ENCODE measurements at regions of chr12 and their contacts with region 1.

Region 1: DNA sequence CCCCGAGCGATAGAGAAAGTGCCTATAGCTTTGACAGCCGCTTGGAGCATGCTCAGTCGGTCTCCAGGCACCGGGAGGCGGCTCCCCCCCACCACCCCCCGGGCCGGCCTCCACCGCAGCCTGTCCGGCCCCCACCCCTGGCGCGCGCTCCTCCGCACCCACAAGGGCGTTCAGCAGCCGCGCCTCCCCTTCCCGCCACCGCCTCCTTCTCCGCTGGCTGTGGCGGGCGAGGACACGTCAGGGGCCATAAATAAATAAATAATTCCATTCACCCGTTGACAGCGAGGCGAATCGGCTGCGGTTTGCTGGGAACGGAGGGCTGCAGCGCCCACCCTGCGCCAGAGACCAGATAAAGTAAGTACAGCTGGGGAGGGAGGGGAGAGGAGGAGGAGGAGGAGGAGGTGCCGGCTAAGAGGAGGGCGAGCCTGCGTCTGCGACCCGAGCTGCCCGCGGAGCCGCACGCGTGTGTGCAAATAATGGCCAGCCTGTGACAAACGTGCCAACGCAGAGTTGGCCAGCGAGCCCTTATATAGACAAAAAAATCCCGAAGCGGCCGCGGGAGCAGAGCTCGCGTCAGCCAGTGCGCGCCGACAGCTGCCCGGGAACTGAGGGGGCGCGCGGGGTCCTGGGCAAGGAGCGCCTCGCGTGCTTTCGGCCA is at the start of gene SLC16A7:
- DNase-seq: peak; percentile 89
- H3K4me3 ChIP-seq: peak within 1 kb of the TSS; percentile 67 to 83 (median 75)
- H3K27ac ChIP-seq: peak within 1 kb of the TSS; percentile 11
- H3K4me1 ChIP-seq: peaks cover 22% of the 10 kb centered on the region
- H3K27me3 ChIP-seq: no peaks in the 10 kb centered on the region
- CTCF ChIP-seq: no peak
- total RNA-seq, gene SLC16A7: 8.2 to 27.3 TPM

Region 2: DNA sequence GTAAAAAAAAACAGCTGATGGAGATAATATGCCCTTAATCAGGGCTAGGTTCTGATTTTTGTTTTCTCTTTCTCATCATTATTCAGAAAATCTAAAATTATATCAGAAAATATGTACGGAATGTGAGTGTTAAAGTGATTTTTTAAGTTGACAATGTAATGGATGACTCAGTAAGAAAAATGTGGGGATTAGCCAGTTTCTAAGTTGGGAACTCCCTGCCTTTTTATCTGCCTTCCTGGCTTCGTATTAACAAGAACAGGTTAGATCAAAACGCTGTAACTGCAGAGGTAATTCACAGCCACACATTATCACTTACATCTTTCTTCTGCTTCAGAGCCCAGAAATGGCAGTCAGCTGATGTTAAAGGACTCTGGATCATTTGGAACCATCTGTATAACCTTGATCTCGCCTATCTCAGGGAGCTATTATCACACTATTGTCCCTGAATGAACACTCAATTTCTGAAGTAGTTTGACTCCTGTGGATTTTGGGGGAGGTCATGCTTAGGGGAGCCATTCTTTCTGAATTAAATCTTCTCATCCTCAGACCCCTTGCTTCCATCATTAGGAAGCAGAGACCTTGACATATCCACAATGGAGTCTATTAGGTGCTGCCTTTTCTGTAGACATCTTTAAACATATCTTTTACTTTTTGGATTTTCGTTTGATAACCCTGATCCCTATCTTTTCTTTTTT is 135.9 kb before region 1 on chr12:
- CTCF ChIA-PET with region 1: no interaction called
- dilution Hi-C with region 1: no loop called
- in situ Hi-C with region 1: no loop called
- intact Hi-C with region 1: loop called (anchors 5 kb)
- DNase-seq: peak; percentile 37
- H3K4me3 ChIP-seq: no peak overlapping the region
- H3K27ac ChIP-seq: no peak overlapping the region
- H3K4me1 ChIP-seq: peaks cover 7% of the 10 kb centered on the region
- H3K27me3 ChIP-seq: no peaks in the 10 kb centered on the region
- CTCF ChIP-seq: no peak

Region 3: GRCh38 chr12:59699421-59700152 is 103.6 kb after region 1 on chr12:
- CTCF ChIA-PET with region 1: no interaction called
- dilution Hi-C with region 1: no loop called
- in situ Hi-C with region 1: no loop called
- intact Hi-C with region 1: loop called (anchors 2 kb)
- DNase-seq: peak; percentile 65
- H3K4me3 ChIP-seq: peak overlapping the region in 1 of 3 experiments; percentile 1
- H3K27ac ChIP-seq: no peak overlapping the region
- H3K4me1 ChIP-seq: peaks cover 17% of the 10 kb centered on the region
- H3K27me3 ChIP-seq: no peaks in the 10 kb centered on the region
- CTCF ChIP-seq: no peak

Region 4: GRCh38 chr12:59780605-59781135 is 184.7 kb after region 1 on chr12:
- CTCF ChIA-PET with region 1: no interaction called
- dilution Hi-C with region 1: no loop called
- in situ Hi-C with region 1: no loop called
- intact Hi-C with region 1: loop called (anchors 2 kb)
- DNase-seq: peak; percentile 33
- H3K4me3 ChIP-seq: no peak overlapping the region
- H3K27ac ChIP-seq: no peak overlapping the region
- H3K4me1 ChIP-seq: no peaks in the 10 kb centered on the region
- H3K27me3 ChIP-seq: no peaks in the 10 kb centered on the region
- CTCF ChIP-seq: peak; percentile 46 to 73

Region 5: DNA sequence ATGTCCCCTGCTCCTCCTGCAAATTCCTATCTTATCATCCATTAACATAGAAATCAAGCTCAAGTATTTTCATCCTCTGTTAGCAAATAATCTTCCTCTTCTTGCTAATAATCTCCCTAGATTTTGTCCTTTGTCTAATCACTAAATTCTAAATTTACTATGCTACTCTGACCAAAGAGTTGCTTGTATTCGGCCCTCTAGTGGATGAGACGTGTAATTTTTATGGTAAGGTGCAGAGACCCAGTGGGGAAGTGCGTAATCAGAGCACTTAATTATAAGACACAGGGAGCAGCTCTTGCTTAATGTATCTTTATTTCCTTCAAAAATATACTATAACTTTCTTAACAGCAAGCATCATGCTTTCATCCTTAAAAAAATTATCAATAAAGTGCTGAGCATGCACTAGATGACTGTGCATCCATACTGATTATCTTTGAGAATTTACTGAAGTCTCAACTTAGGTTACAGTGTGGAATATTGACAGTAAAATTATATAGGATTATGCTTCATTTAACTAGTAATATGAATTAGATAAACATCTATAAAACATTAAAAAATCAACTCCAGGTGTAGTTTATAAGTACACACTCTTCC is 212.4 kb after region 1 on chr12:
- CTCF ChIA-PET with region 1: no interaction called
- dilution Hi-C with region 1: no loop called
- in situ Hi-C with region 1: no loop called
- intact Hi-C with region 1: loop called (anchors 2 kb)
- DNase-seq: peak; percentile 22
- H3K4me3 ChIP-seq: no peak overlapping the region
- H3K27ac ChIP-seq: no peak overlapping the region
- H3K4me1 ChIP-seq: peaks cover 5% of the 10 kb centered on the region
- H3K27me3 ChIP-seq: no peaks in the 10 kb centered on the region
- CTCF ChIP-seq: peak; percentile 76 to 80

Region 6: DNA sequence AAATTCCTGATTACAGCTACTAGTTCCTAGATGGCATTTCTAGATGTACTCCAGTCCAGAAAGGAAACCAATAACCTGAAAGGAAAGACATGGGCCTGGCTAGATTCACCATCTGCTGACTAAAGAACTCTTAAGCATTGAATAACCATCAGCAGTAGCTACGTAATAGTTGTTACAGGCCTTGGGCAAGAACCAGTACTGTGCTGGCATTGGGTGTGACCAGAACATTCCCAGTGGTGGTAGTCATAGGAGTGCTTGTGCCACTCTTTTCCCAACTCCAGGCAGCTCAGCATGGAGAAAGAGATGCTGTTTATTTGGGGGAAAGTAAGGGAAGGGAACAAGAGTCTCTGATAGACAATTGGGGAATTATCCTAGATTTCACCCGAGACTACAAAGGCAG is 333.1 kb after region 1 on chr12:
- CTCF ChIA-PET with region 1: no interaction called
- dilution Hi-C with region 1: no loop called
- in situ Hi-C with region 1: no loop called
- intact Hi-C with region 1: loop called (anchors 5 kb)
- DNase-seq: peak; percentile 95
- H3K4me3 ChIP-seq: no peak overlapping the region
- H3K27ac ChIP-seq: peak overlapping the region; percentile 86
- H3K4me1 ChIP-seq: peaks cover 32% of the 10 kb centered on the region
- H3K27me3 ChIP-seq: no peaks in the 10 kb centered on the region
- CTCF ChIP-seq: no peak